Tibial artery (tissue), 4 donors: ENCODE measurements at regions of chr17 and their contacts with region 1.

Region 1: DNA sequence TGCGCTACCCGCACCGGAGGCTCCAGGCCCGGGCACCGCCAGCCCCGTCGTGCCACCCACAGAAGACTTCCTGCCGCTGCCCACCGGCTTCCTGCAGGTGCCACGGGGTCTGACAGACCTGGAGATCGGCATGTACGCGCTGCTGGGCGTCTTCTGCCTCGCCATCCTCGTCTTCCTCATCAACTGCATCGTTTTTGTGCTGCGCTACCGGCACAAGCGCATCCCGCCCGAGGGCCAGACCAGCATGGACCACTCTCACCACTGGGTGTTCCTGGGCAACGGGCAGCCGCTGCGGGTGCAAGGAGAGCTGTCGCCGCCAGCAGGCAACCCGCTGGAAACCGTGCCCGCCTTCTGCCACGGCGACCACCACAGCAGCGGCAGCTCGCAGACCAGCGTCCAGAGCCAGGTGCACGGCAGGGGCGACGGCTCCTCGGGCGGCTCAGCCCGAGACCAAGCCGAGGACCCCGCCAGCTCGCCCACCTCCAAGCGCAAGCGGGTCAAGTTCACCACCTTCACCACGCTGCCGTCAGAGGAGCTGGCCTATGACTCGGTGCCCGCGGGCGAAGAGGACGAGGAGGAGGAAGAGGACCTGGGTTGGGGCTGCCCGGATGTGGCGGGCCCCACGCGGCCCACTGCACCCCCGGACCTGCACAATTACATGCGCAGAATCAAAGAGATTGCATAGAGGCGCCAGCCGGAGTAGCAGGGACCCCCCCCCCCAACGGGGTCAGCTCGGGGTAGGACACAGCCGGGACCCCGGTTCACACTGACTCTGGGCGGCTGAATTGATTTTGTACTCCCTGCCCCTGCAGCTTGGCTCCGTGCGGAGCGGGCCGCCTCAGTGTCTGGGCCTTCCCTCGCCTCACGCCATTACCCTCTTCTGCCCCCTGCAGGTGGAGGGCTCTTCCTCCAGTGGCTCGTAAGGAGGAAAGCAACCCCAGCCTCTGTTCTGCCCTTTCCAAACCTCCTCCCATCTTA is 58.5 kb downstream of the TMEM132E start:
- DNase-seq: peak; percentile 68 to 78
- H3K4me3 ChIP-seq: peak overlapping the region; percentile 31 to 34
- H3K27ac ChIP-seq: no peak overlapping the region
- H3K4me1 ChIP-seq: peaks cover 0 to 9% (median 7%) of the 10 kb centered on the region in 4 donors
- H3K27me3 ChIP-seq: peaks cover 0 to 79% of the 10 kb centered on the region in 2 donors
- CTCF ChIP-seq: peak; percentile 67 to 72

Region 2: GRCh38 chr17:34420254-34420766 is 217.5 kb before region 1 on chr17:
- intact Hi-C with region 1: loop called (anchors 5 kb)
- DNase-seq: peak in 1 of 2 donors; percentile 59
- H3K4me3 ChIP-seq: no peak overlapping the region
- H3K27ac ChIP-seq: no peak overlapping the region
- H3K4me1 ChIP-seq: no peaks in the 10 kb centered on the region
- H3K27me3 ChIP-seq: peaks cover 0 to 70% of the 10 kb centered on the region in 2 donors
- CTCF ChIP-seq: peak; percentile 89 to 92

Region 3: DNA sequence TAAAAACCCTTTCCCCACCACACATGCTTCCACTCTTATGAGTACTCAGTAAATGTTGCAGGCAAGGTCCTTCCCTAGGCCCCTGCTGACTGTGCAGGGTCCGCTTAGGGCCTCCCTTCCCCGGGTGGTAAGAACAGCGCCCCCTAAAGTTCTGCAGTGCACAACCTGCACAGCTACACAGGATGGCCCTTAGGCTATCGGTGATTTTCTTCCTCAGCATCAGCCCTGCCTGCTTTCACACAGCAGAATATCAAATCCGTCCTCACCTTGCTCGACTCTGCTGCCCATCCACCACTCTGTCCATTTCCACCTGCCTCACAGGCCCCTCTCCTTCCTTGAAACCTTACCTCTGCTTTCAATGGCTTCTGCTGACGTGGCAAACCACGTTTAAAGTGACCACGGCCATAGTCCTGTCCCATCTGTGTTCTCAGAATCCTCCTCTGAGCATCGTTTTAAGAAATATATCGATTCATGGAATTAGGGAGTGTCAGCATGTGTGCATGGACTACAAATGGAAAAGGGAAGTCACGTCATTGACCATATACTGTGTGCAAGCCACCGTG is 109.8 kb before region 1 on chr17:
- intact Hi-C with region 1: no loop called
- DNase-seq: no peak
- H3K4me3 ChIP-seq: no peak overlapping the region
- H3K27ac ChIP-seq: no peak overlapping the region
- H3K4me1 ChIP-seq: no peaks in the 10 kb centered on the region
- H3K27me3 ChIP-seq: peaks cover 0 to 31% of the 10 kb centered on the region in 2 donors
- CTCF ChIP-seq: no peak

Region 4: GRCh38 chr17:34542700-34543336 is 95.0 kb before region 1 on chr17:
- intact Hi-C with region 1: loop called (anchors 5 kb)
- DNase-seq: no peak
- H3K4me3 ChIP-seq: no peak overlapping the region
- H3K27ac ChIP-seq: no peak overlapping the region
- H3K4me1 ChIP-seq: no peaks in the 10 kb centered on the region
- H3K27me3 ChIP-seq: peaks cover 0 to 38% of the 10 kb centered on the region in 2 donors
- CTCF ChIP-seq: peak; percentile 71 to 73

Region 5: GRCh38 chr17:34797720-34798119 is 159.9 kb after region 1 on chr17:
- intact Hi-C with region 1: no loop called
- DNase-seq: no peak
- H3K4me3 ChIP-seq: no peak overlapping the region
- H3K27ac ChIP-seq: no peak overlapping the region
- H3K4me1 ChIP-seq: no peaks in the 10 kb centered on the region
- H3K27me3 ChIP-seq: peaks cover 0 to 2% of the 10 kb centered on the region in 2 donors
- CTCF ChIP-seq: no peak